B cell (primary cell): ENCODE measurements at regions of chr13 and their contacts with region 1.

Region 1: DNA sequence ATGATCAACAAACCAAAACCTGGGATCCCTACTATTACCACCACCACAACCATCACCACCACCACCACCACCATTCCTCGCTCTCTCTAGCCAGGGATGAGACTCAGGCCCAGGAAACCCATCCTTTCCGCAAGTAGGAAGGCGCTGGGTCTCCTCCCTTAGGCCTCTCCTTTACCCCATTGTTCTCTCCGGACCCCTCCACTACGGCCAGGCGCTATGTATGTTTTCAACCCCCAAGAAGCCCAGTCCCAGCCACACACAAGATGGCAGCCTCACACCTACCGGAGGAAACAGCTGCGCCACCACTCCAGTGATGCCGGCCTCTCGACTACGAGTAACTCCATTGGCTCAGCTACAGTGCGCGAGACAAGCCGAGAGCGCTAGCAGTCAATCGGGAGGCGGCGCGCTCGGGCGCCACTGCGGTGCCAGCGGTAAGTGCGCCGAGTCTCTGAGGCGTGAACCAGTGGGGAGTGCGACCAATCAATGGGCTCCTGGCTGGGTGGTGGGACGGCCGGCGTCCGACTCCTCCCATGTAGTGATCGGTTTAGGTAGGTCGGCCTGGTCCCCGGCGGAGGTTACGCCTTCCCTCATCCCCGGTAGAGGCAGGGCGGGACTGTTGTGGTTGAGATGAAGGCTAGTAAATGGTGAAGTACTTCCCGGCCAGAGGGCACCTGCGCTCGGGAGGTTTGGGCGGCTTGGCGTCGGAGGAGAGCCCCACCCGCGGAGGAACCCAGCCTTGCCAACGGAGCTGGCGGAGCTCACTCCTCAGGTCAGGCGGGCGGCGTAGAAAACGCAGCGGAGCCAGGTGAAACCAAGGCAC is at the starts of genes CAB39L and SETDB2:
- DNase-seq: peak; percentile 100
- ATAC-seq: peak; percentile 89
- H3K4me3 ChIP-seq: peak within 1 kb of the TSS; percentile 63 to 98 (median 81)
- H3K4me3 Mint-ChIP-seq: peak within 1 kb of the TSS; percentile 96
- H3K27ac ChIP-seq: peak within 1 kb of the TSS; percentile 97
- H3K27ac Mint-ChIP-seq: peak within 1 kb of the TSS; percentile 99
- H3K4me1 ChIP-seq: peaks cover 33 to 51% of the 10 kb centered on the region in 2 donors
- H3K4me1 Mint-ChIP-seq: peaks cover 71% of the 10 kb centered on the region
- H3K27me3 ChIP-seq: no peaks in the 10 kb centered on the region
- H3K27me3 Mint-ChIP-seq: no peaks in the 10 kb centered on the region
- CTCF ChIP-seq: peak; percentile 34
- total RNA-seq, gene CAB39L: 8.9 and 9.6 TPM in 2 replicates
- total RNA-seq, gene SETDB2: 38.2 and 40.1 TPM in 2 replicates

Region 2: GRCh38 chr13:49247643-49248621 is 196.0 kb before region 1 on chr13 and contains the start of gene CDADC1:
- CTCF ChIA-PET with region 1: no interaction called
- POLR2A ChIA-PET with region 1: no interaction called
- intact Hi-C with region 1: loop called (anchors 2 kb)
- DNase-seq: peak; percentile 92
- ATAC-seq: peak; percentile 95
- H3K4me3 ChIP-seq: peak within 1 kb of the TSS; percentile 86 to 92 (median 89)
- H3K4me3 Mint-ChIP-seq: peak within 1 kb of the TSS; percentile 100
- H3K27ac ChIP-seq: peak within 1 kb of the TSS; percentile 76 to 86
- H3K27ac Mint-ChIP-seq: peak within 1 kb of the TSS; percentile 97
- H3K4me1 ChIP-seq: peaks cover 10 to 11% of the 10 kb centered on the region in 2 donors
- H3K4me1 Mint-ChIP-seq: peaks cover 26% of the 10 kb centered on the region
- H3K27me3 ChIP-seq: no peaks in the 10 kb centered on the region
- H3K27me3 Mint-ChIP-seq: no peaks in the 10 kb centered on the region
- CTCF ChIP-seq: no peak
- total RNA-seq, gene CDADC1: 14.5 and 15.1 TPM in 2 replicates

Region 3: GRCh38 chr13:49300739-49301589 is 142.9 kb before region 1 on chr13:
- CTCF ChIA-PET with region 1: interaction called, 4 read pairs
- POLR2A ChIA-PET with region 1: no interaction called
- intact Hi-C with region 1: loop called (anchors 2 kb)
- DNase-seq: peak; percentile 84
- ATAC-seq: peak; percentile 96
- H3K4me3 ChIP-seq: peak overlapping the region in 4 of 5 experiments; percentile 29 to 57 (median 46)
- H3K4me3 Mint-ChIP-seq: peak overlapping the region; percentile 81
- H3K27ac ChIP-seq: no peak overlapping the region
- H3K27ac Mint-ChIP-seq: peak overlapping the region; percentile 66
- H3K4me1 ChIP-seq: peaks cover 4 to 20% of the 10 kb centered on the region in 2 donors
- H3K4me1 Mint-ChIP-seq: peaks cover 30% of the 10 kb centered on the region
- H3K27me3 ChIP-seq: no peaks in the 10 kb centered on the region
- H3K27me3 Mint-ChIP-seq: no peaks in the 10 kb centered on the region
- CTCF ChIP-seq: peak; percentile 91

Region 4: GRCh38 chr13:49530457-49530856 is 86.5 kb after region 1 on chr13:
- CTCF ChIA-PET with region 1: interaction called, 3 read pairs
- POLR2A ChIA-PET with region 1: interaction called, 5 read pairs
- intact Hi-C with region 1: loop called (anchors 2 kb)
- DNase-seq: peak; percentile 77
- ATAC-seq: peak; percentile 84
- H3K4me3 ChIP-seq: peak overlapping the region in 1 of 5 experiments; percentile 5
- H3K4me3 Mint-ChIP-seq: peak overlapping the region; percentile 59
- H3K27ac ChIP-seq: peak overlapping the region; percentile 66 to 82
- H3K27ac Mint-ChIP-seq: peak overlapping the region; percentile 92
- H3K4me1 ChIP-seq: peaks cover 44 to 50% of the 10 kb centered on the region in 2 donors
- H3K4me1 Mint-ChIP-seq: peaks cover 66% of the 10 kb centered on the region
- H3K27me3 ChIP-seq: no peaks in the 10 kb centered on the region
- H3K27me3 Mint-ChIP-seq: no peaks in the 10 kb centered on the region
- CTCF ChIP-seq: no peak

Region 5: DNA sequence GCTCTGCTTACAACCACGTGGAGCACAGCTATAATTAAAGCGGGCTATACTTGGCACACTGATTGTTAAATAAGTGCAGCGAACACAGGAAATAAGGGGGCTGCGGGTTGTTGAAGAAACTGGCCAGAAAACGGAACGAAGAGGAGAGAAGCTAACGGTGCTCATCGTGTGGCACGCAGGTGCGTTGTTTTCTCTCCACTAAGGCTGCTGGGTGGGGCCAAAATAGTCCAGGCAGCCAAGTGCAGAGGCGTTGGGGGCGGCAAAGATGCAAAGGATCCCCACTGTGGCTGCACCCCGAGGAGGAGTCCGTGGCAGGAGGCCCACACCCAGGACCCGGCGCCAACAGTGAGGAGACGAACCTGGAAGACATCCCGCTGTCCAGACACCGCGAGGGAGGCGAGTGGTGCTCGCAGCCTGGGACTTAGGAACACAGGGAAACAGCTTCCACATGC is 176.3 kb after region 1 on chr13:
- CTCF ChIA-PET with region 1: no interaction called
- POLR2A ChIA-PET with region 1: interaction called, 3 read pairs
- intact Hi-C with region 1: loop called (anchors 5 kb)
- DNase-seq: no peak
- ATAC-seq: peak; percentile 95
- H3K4me3 ChIP-seq: peak overlapping the region in 3 of 5 experiments; percentile 9 to 48 (median 35)
- H3K4me3 Mint-ChIP-seq: peak overlapping the region; percentile 81
- H3K27ac ChIP-seq: peak overlapping the region in 1 of 2 donors; percentile 60
- H3K27ac Mint-ChIP-seq: peak overlapping the region; percentile 85
- H3K4me1 ChIP-seq: no peaks in the 10 kb centered on the region
- H3K4me1 Mint-ChIP-seq: peaks cover 25% of the 10 kb centered on the region
- H3K27me3 ChIP-seq: no peaks in the 10 kb centered on the region
- H3K27me3 Mint-ChIP-seq: no peaks in the 10 kb centered on the region
- CTCF ChIP-seq: no peak